Breast epithelium (tissue), 4 donors: ENCODE measurements at regions of chr9 and their contacts with region 1.

Region 1: GRCh38 chr9:23258569-23258968 is 567.5 kb downstream of the ELAVL2 start:
- DNase-seq: no peak
- H3K4me3 ChIP-seq: no peak overlapping the region
- H3K27ac ChIP-seq: no peak overlapping the region
- H3K4me1 ChIP-seq: no peaks in the 10 kb centered on the region
- H3K27me3 ChIP-seq: no peaks in the 10 kb centered on the region
- CTCF ChIP-seq: no peak
- POLR2A ChIP-seq: no peak

Region 2: GRCh38 chr9:22643541-22643940 is 615.0 kb before region 1 on chr9:
- intact Hi-C with region 1: loop called (anchors 5 kb)
- DNase-seq: no peak
- H3K4me3 ChIP-seq: no peak overlapping the region
- H3K27ac ChIP-seq: no peak overlapping the region
- H3K4me1 ChIP-seq: no peaks in the 10 kb centered on the region
- H3K27me3 ChIP-seq: no peaks in the 10 kb centered on the region
- CTCF ChIP-seq: no peak
- POLR2A ChIP-seq: no peak

Region 3: DNA sequence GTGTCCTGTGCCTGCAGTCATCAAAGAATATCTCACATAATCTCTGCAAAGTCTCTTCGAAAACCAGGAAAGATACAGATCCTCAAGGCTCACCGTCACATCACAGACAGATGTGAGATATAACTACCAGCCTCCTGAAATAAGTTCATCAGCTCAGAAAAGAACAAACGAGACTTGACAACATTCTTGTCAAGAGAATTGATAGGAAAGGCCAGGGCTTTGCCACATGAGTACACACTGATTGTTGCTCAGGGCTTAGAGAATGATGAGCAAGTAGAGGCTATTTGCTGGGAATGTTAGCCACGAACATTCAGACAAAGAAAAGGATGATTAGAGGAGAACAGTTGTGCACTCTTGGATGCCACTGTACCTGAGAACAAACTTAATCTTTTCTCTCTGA is 32.4 kb after region 1 on chr9:
- intact Hi-C with region 1: no loop called
- DNase-seq: no peak
- H3K4me3 ChIP-seq: no peak overlapping the region
- H3K27ac ChIP-seq: no peak overlapping the region
- H3K4me1 ChIP-seq: no peaks in the 10 kb centered on the region
- H3K27me3 ChIP-seq: no peaks in the 10 kb centered on the region
- CTCF ChIP-seq: no peak
- POLR2A ChIP-seq: no peak

Region 4: DNA sequence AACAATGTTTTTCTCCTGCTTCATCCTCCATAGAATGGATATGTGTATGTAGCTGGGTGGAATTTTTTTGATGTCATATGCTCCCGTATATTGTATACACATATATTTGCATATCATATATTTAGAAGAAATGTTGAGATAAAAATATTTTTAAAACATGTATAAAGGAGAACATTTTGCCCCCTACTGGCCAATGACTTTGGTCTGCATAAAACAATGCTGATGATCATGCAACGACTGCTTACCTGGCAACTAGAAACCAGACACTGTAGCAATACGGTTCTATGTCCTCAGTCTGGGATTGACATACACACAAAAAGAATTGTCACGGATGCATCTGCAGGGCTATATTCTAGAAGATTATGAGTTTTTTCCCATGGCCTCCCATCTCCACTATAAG is 63.8 kb after region 1 on chr9:
- intact Hi-C with region 1: no loop called
- DNase-seq: no peak
- H3K4me3 ChIP-seq: no peak overlapping the region
- H3K27ac ChIP-seq: no peak overlapping the region
- H3K4me1 ChIP-seq: no peaks in the 10 kb centered on the region
- H3K27me3 ChIP-seq: no peaks in the 10 kb centered on the region
- CTCF ChIP-seq: no peak
- POLR2A ChIP-seq: no peak

Region 5: GRCh38 chr9:23412458-23412857 is 153.9 kb after region 1 on chr9:
- intact Hi-C with region 1: no loop called
- DNase-seq: no peak
- H3K4me3 ChIP-seq: no peak overlapping the region
- H3K27ac ChIP-seq: no peak overlapping the region
- H3K4me1 ChIP-seq: no peaks in the 10 kb centered on the region
- H3K27me3 ChIP-seq: no peaks in the 10 kb centered on the region
- CTCF ChIP-seq: no peak
- POLR2A ChIP-seq: no peak

Region 6: GRCh38 chr9:24293386-24293785 is 1034.8 kb after region 1 on chr9:
- intact Hi-C with region 1: no loop called
- DNase-seq: no peak
- H3K4me3 ChIP-seq: no peak overlapping the region
- H3K27ac ChIP-seq: no peak overlapping the region
- H3K4me1 ChIP-seq: no peaks in the 10 kb centered on the region
- H3K27me3 ChIP-seq: no peaks in the 10 kb centered on the region
- CTCF ChIP-seq: no peak
- POLR2A ChIP-seq: no peak

Region 7: GRCh38 chr9:24516463-24516862 is 1257.9 kb after region 1 on chr9:
- intact Hi-C with region 1: loop called (anchors 5 kb)
- DNase-seq: no peak
- H3K4me3 ChIP-seq: no peak overlapping the region
- H3K27ac ChIP-seq: no peak overlapping the region
- H3K4me1 ChIP-seq: no peaks in the 10 kb centered on the region
- H3K27me3 ChIP-seq: no peaks in the 10 kb centered on the region
- CTCF ChIP-seq: no peak
- POLR2A ChIP-seq: no peak